SK-N-SH (cell line): ENCODE measurements at regions of chr3 and their contacts with region 1.

Region 1: GRCh38 chr3:138915503-138916498 is 31.1 kb downstream of the FOXL2 start:
- DNase-seq: peak; percentile 93
- H3K4me3 ChIP-seq: peak overlapping the region; percentile 64 to 91
- H3K27ac ChIP-seq: peak overlapping the region in 1 of 2 experiments; percentile 76; a peak in 2 of 4 replicates
- H3K4me1 ChIP-seq: peaks cover 0 to 3% of the 10 kb centered on the region in 2 experiments; a peak in 1 of 4 replicates
- H3K27me3 ChIP-seq: no peaks in the 10 kb centered on the region
- CTCF ChIP-seq: peak; percentile 82
- EP300 ChIP-seq: no peak
- RAD21 ChIP-seq: peak; percentile 65

Region 2: DNA sequence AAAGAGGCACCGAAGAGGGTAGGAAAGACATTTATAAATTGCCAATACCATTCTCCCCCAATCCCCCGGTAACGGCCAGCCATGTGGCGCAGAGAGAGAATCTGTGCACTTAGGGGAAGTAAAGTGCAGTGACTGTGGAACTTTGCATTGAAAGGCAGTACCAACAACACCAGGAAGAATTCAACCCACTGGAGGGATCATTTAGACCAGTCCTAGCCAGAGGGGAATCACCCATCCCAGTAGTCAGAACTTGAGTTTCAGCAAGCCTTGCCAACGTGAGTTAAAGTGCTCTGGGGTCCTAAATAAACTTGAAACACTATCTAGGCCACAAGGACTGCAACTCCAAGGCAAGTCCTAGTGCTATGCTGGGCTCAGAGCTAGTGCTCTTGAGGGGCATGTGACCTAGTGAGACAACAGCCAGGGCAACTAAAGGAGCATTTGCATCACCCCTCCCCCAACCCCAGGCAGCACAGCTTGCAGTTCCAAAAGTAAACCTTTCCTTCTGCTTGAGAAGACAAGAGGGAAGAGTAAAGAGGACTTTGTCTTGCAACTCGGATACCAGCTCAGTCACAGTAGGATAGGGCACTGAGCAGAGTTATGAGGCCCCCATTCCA is 336.7 kb before region 1 on chr3:
- CTCF ChIA-PET with region 1: interaction called, 10 read pairs
- POLR2A ChIA-PET with region 1: no interaction called
- DNase-seq: no peak
- H3K4me3 ChIP-seq: no peak overlapping the region
- H3K27ac ChIP-seq: no peak overlapping the region
- H3K4me1 ChIP-seq: no peaks in the 10 kb centered on the region
- H3K27me3 ChIP-seq: no peaks in the 10 kb centered on the region
- CTCF ChIP-seq: no peak
- EP300 ChIP-seq: no peak
- RAD21 ChIP-seq: no peak

Region 3: DNA sequence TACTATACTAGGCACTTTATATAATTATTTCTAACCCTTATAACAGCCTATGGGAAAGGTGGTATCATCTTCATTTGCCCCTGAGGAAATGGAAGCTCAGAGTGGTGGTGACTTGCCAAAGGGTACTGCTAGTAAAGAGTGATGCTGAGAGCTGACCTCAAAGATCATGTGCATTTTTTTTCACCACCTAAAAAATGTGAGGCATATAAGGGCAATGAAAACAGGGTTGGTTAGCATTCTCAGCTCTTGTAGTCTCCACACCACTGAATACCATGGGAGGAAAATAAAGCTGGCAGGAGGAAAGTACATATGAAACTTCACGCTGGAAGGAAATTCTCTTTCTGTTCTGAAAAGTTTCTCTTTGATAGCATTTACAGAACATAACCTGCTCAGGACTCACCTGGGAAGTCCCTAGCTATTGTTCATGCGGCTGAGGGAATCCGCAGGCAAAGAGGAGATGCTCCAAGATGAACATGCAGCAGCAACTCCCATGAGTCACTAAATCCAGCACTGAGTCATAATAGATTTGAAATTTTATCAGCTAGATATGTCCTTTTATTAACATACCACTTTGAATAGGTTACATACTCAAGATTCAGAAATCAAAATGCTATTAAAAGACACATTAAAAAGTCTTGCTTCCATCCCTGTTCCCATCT is 290.0 kb before region 1 on chr3:
- CTCF ChIA-PET with region 1: interaction called, 23 read pairs
- POLR2A ChIA-PET with region 1: no interaction called
- DNase-seq: no peak
- H3K4me3 ChIP-seq: no peak overlapping the region
- H3K27ac ChIP-seq: no peak overlapping the region
- H3K4me1 ChIP-seq: no peaks in the 10 kb centered on the region; a peak in 1 of 4 replicates
- H3K27me3 ChIP-seq: no peaks in the 10 kb centered on the region
- CTCF ChIP-seq: no peak
- EP300 ChIP-seq: 0 out of 4 replicates have a peak, but pooled peaks of 1 of the 2 experiments have one; percentile 8
- RAD21 ChIP-seq: no peak

Region 4: DNA sequence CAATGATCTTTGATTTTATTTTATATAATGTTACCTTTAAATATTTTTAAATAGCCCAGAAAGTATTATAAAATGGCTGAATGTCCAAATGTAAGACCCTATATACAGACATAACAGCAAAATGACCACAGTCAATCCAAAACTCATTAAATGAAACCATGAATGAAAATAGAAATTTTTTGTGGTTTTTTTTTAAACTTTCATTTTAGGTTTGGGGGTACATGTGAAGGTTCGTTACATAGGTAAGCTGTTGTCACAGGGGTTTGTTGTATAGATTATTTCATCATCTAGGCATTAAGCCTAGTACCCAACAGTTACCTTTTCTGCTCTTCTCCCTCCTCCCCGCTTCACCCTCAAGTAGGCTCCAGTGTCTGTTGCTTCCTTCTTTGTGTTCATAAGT is 198.5 kb before region 1 on chr3:
- CTCF ChIA-PET with region 1: interaction called, 38 read pairs
- POLR2A ChIA-PET with region 1: no interaction called
- DNase-seq: no peak
- H3K4me3 ChIP-seq: no peak overlapping the region
- H3K27ac ChIP-seq: no peak overlapping the region
- H3K4me1 ChIP-seq: no peaks in the 10 kb centered on the region
- H3K27me3 ChIP-seq: no peaks in the 10 kb centered on the region
- CTCF ChIP-seq: no peak
- EP300 ChIP-seq: no peak
- RAD21 ChIP-seq: no peak

Region 5: DNA sequence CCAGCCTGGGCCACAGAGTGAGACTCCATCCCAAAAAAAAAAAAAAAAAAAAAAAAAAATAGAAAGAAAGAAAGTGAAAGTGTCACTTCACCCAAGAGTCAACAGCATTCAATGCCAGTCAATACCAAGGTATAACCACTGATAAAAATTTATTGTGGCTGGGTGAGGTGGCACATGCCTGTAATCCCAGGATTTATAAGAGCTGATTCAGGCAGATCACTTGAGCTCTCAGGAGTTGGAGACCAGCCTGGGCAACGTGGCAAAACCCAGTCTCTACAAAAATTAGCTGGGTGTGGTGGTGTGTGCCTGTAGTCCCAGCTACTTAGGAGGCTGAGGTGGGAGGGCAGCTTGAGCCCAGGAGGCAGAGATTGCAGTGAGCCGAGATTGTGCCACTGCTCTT is 34.6 kb before region 1 on chr3:
- CTCF ChIA-PET with region 1: interaction called, 13 read pairs
- POLR2A ChIA-PET with region 1: no interaction called
- DNase-seq: no peak
- H3K4me3 ChIP-seq: no peak overlapping the region
- H3K27ac ChIP-seq: no peak overlapping the region
- H3K4me1 ChIP-seq: no peaks in the 10 kb centered on the region
- H3K27me3 ChIP-seq: no peaks in the 10 kb centered on the region
- CTCF ChIP-seq: no peak
- EP300 ChIP-seq: no peak
- RAD21 ChIP-seq: no peak

Region 6: DNA sequence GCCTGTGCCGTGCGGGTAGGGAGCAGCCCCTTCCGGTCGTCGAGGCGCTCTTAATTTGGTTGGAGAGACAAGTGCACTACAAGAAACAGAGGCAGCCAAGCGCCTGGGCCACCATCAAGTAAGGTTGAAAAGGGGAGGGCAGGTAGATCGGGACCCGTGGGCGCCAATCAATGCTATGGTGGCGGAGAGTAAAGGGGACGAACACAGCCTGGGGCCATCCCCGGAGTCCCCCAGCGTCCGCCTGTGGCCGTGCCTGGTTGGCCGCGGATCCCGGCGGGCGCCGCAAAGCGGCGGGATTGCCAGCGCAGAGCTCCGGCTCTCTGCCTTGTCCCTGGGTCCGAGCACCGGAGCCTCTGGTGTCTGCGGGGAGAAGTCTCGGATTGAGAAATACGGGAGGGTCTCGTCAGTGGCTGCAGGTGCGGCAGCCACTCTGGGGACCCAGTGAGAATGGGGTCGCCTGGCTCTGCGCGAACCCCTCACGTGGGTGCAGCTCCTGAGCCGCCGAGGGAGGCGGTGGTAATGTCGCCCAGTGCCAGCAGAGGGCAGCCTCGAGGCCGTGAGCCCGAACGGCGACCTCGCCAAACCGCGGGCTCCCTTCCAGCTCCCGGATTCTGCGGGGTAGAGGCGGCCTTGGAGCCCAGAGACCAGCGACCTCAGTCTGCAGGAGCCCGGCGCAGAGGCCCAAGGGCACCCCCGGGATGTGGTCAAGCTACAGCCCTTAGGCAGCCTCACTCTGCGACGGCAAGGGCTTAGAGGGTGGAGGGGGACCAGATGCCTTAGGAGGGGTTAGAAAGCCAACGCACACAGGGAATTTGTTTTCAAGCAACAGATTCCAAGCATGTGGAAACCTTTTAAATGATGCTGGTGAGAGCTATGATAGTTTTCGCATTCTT is 20.3 kb after region 1 on chr3:
- CTCF ChIA-PET with region 1: interaction called, 28 read pairs
- POLR2A ChIA-PET with region 1: no interaction called
- DNase-seq: peak; percentile 94
- H3K4me3 ChIP-seq: peak overlapping the region; percentile 39 to 52
- H3K27ac ChIP-seq: no peak overlapping the region
- H3K4me1 ChIP-seq: peaks cover 0 to 8% of the 10 kb centered on the region in 2 experiments; a peak in 1 of 4 replicates
- H3K27me3 ChIP-seq: peaks cover 74% of the 10 kb centered on the region
- CTCF ChIP-seq: peak; percentile 77
- EP300 ChIP-seq: no peak
- RAD21 ChIP-seq: peak; percentile 42